GM23248 (cell line): ENCODE measurements at regions of chrX and their contacts with region 1.

Region 1: GRCh38 chrX:132615391-132616131 is 126.7 kb upstream of the MBNL3 start:
- DNase-seq: peak; percentile 45
- H3K4me3 ChIP-seq: no peak overlapping the region
- H3K27ac ChIP-seq: no peak overlapping the region
- H3K4me1 ChIP-seq: no peaks in the 10 kb centered on the region
- H3K27me3 ChIP-seq: no peaks in the 10 kb centered on the region

Region 2: GRCh38 chrX:131830400-131831184 is 785.0 kb before region 1 on chrX:
- in situ Hi-C with region 1: loop called (anchors 25 kb)
- DNase-seq: peak; percentile 42
- H3K4me3 ChIP-seq: no peak overlapping the region
- H3K27ac ChIP-seq: no peak overlapping the region
- H3K4me1 ChIP-seq: no peaks in the 10 kb centered on the region
- H3K27me3 ChIP-seq: no peaks in the 10 kb centered on the region

Region 3: DNA sequence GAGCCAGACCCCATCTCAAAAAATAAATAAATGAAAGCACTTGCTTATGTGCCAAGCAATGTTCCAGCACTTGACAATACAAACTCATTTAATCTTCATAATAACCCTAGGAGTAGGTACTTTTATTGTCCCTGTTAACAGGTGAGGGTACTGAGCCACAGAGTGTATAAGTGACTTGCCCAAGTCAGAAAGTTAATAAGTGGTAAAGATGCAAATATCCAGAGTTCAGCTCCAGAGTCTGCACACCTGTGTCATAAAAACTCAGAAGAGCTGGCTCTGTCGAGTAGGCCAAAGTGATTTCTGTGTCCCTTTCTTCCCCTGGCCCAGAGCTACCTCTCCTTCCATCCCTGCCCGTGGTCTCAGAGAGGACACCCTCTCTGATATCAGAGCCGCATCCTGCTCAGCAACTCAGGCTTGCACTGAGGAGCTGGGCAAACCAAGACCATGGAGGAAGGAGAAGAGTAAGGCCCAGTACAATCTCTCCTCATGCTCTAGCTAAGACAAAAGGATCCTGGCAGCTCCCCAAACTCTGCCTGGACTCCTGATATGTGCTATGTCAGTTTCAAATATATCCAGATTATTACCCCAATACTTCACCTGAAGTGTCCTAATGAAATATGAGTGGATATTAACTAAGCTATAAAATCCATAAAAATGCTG is 206.5 kb after region 1 on chrX:
- in situ Hi-C with region 1: no loop called
- DNase-seq: no peak
- H3K4me3 ChIP-seq: no peak overlapping the region
- H3K27ac ChIP-seq: no peak overlapping the region
- H3K4me1 ChIP-seq: no peaks in the 10 kb centered on the region
- H3K27me3 ChIP-seq: no peaks in the 10 kb centered on the region